Activated T-helper 1 cell treated with anti-CD3 and anti-CD28 coated beads, Interleukin-12 subunit alpha, Interleukin-12 subunit beta, Interleukin-2, Interleukin-4 antibody, amounts not matched to agents 30 ng/mL and 10 ng/mL and 1 ng/mL, durations not matched to agents 14 hours and 24 hours and 36 hours (primary cell): ENCODE measurements at regions of chr4 and their contacts with region 1.

Region 1: DNA sequence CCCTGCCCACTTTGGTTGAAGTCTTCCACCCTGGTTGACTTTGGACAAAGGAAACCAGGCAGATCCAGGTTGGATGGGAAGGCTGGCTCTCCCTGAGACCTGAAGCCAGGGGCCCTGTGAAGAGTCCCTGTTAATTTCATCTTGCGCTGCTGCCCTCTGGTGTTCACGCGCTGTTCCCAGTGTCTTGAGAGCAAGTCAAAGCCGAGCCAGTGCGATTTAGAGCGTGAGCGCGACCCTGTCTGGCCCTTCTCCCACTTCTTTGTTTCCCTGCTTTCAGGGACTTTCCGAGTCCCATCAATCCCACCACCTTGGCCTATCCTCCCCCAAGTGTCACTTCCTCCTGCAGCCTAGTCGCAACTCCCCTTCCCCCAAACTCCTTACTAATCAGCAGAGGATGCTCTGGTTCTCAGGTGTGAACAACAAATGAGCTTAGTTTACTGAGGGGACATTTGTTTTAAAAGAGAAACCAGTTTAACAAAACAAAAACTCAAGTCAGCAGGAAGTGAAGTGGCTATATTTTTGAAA is 25.8 kb upstream of the CHRNA9 start:
- DNase-seq: peak; percentile 81
- H3K4me3 Mint-ChIP-seq: peak overlapping the region; percentile 67
- H3K27ac Mint-ChIP-seq: peak overlapping the region; percentile 94
- H3K4me1 Mint-ChIP-seq: peaks cover 88% of the 10 kb centered on the region
- H3K27me3 Mint-ChIP-seq: no peaks in the 10 kb centered on the region

Region 2: DNA sequence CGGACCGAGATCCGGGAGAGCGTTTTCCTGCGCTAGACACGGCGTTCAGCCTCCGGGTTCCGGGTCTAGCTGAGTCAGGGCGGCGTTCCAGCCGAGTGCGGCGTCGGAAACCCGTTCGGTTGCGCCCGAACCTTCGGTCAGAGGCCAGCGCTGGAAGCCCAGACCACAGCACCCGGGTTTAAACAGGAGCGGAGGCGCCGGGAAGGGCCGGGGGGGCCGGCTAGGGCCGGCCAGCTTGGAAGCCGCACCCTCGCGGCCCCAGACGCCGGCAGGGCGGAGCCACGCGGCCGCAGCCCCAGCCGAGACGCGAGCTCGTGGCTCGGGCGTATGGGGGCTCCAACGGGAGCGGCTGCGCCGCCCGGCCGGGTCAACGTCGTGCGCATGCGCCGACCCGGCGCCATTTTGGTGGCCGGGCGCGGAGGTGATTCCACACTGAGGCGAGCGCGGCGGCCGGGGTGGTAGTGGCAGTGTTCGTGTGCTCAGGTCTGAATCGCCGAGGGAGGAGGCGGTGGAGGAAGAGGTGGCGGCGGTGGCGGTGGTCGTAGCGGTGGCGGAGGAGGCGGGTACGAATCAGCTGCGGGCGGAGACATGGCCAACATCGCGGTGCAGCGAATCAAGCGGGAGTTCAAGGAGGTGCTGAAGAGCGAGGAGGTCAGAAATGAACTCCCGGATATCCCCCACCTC is 611.4 kb before region 1 on chr4 and contains the start of gene UBE2K:
- intact Hi-C with region 1: loop called (anchors 5 kb)
- DNase-seq: peak; percentile 91
- H3K4me3 Mint-ChIP-seq: peak within 1 kb of the TSS; percentile 97
- H3K27ac Mint-ChIP-seq: peak within 1 kb of the TSS; percentile 97
- H3K4me1 Mint-ChIP-seq: peaks cover 37% of the 10 kb centered on the region
- H3K27me3 Mint-ChIP-seq: no peaks in the 10 kb centered on the region
- total RNA-seq, gene UBE2K: 92.2 and 96.4 TPM in 2 replicates

Region 3: DNA sequence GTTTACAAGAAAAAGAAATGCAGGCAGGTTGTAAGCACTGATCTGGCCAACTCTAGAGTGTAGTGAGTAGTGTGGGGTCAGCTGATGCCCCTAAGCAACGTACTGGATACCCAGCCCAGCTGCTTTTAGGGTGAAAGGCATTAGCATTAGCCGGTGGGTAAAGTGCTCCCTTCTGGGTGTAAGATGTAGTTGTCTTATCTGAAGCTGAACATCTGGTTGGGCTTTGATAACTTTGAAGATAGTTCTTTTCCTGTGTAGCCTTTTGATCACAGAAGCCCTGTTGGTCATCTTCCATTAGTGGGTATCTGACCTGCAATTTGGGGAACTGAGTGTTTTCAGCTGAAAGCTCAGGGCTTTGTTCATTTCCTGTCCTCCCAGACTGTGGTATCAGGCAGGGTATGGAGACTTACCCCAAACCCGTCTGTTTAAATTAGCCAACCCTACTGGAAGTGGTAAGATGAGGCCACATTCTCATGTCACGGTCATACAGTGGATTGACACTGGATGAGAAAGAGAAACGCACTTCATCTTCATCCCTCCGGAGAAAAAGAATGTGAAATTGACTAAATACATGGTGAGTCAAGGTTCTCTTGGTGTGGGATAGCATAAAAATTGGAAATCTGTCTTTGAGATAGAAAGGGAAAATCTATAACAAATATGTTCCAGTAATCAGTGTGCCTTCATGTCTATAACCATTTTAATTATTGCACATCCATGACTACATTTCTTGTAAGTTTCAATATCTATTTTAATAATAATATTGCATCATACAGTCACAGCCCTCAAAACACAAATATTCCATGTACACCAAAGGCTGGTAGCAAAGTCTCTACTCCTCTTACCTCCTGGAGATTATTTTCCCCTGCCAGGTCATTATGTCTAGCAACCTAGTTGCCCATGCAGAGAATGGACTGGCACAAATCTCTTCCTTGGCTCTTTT is 103.8 kb before region 1 on chr4:
- intact Hi-C with region 1: loop called (anchors 1 kb)
- DNase-seq: no peak
- H3K4me3 Mint-ChIP-seq: peak overlapping the region; percentile 95
- H3K27ac Mint-ChIP-seq: peak overlapping the region; percentile 97
- H3K4me1 Mint-ChIP-seq: peaks cover 82% of the 10 kb centered on the region
- H3K27me3 Mint-ChIP-seq: no peaks in the 10 kb centered on the region

Region 4: DNA sequence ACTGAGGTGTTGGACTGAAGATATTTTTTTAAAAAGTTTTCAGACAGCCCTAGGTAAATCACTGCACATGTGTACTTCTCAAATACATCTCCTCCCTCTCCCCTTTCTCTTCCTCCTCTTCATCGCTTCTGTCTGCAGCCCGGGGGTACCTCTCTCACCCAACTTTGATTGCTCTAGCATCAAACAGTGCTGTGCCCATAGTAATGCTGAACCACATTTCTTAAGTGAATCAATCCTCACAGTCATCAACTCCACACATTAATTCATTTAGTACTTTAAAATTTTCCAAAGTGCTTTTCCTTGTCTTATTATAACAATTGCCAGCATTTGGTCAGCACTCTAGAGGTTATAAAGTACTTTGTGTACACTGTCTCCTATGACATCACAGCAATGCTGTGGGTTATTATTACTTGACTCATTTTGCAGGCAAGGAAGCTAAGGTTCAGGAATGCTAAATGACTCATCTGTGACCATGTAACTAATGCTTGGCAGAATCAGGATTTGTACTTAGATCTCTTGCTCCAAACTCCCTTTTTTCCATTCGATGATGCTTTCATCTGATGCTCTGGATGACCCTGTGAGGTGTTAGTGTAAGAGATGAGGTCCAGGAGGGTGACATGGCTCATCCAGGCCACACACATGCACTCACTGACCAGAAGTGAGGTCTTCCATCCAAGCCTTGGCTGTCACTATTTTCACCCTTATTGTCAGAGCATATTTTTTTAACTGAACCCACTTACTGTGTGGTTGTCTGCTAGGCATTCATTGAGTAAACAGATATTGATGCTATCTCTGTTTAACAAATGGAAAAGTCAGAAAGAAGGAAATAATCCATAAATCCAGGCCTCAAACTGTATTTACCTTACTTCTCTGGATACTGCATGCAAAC is 53.7 kb before region 1 on chr4:
- intact Hi-C with region 1: loop called (anchors 1 kb)
- DNase-seq: no peak
- H3K4me3 Mint-ChIP-seq: peak overlapping the region; percentile 42
- H3K27ac Mint-ChIP-seq: peak overlapping the region; percentile 93
- H3K4me1 Mint-ChIP-seq: peaks cover 67% of the 10 kb centered on the region
- H3K27me3 Mint-ChIP-seq: no peaks in the 10 kb centered on the region

Region 5: DNA sequence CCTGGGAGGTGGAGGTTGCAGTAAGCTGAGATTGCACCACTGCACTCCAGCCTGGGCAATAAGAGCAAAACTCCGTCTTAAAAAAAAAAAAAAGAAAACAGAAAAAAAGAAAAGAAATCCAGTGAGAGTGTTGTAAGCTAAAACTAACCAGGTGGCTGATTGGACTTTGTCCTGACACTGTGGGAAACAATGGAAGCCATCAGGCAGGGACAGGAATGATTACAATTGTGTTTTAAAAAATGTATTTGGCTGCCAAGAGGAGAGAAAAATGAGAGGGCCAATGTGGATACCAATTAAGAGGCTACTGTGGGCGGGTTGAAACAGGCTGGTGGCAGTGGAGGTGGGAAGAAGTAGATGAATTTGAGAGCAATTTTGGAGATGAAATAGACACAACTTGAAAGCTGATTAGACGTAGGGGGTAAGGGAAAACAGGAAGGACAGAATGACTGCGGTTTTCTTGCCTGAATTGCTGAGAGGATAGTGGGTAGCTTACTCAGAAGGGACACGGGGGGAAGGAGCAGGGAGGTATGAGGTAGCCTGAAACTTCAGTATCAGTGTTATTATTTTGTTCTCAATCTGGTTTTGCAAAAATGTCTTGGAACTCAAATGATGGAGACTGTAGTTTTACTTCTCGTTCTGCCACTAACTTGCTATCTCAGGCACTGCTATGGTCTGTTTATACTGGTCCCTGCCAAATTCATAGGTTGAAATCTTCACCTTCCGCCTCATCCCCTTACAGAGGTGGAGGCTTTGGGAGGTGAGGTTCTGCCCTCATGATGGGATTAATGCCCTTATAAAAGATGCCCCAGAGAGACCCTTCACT is 19.7 kb before region 1 on chr4:
- intact Hi-C with region 1: loop called (anchors 1 kb)
- DNase-seq: no peak
- H3K4me3 Mint-ChIP-seq: peak overlapping the region; percentile 31
- H3K27ac Mint-ChIP-seq: peak overlapping the region; percentile 78
- H3K4me1 Mint-ChIP-seq: peaks cover 56% of the 10 kb centered on the region
- H3K27me3 Mint-ChIP-seq: no peaks in the 10 kb centered on the region

Region 6: DNA sequence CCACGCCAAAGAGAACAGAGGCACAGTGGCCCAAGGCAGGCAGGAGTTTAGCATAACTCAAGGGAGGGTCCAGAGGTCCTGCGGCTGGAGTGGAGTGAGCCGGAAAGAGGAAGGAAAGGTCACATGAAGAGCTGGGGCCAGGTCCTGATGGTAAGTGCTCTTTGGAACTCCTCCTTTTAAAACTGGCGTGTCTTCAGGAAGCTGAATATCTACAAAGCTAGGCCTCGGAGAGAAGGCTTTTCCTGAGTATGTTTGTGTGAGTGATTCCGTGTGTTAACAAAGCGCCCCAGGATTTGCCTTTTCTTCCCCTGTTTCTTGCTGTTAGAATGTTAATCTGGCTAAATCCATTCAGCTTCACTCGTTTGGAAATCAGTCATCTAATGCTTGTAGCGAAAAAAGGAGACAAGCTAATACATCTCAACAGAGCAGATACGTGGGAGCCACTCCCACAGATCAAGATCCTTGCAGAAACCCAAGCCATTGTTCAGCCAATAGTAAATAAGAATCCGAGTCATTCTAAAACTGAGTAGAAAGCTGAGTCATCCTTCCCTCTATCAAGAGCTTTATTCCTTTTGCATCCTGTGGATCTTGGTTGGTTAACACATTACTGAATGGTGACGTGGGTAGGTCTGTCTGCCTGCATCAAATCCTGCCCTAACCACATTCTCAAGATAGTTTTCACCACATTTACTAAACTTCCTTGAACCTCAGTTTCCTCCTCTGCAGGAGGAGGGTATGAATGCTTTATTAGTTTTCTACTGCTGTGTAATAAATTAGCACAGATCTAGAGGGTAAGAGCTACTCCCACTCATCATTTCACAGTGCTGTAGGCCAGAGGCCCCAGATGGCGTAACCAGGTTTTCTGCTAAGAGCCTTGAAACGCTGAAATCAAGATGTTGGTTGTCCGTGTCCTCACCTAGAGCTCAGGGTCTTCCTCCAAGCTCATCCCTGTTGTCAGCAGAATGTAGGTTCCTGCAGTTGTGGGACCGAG is 363.5 kb after region 1 on chr4:
- intact Hi-C with region 1: loop called (anchors 5 kb)
- DNase-seq: peak; percentile 59
- H3K4me3 Mint-ChIP-seq: peak overlapping the region; percentile 57
- H3K27ac Mint-ChIP-seq: peak overlapping the region; percentile 86
- H3K4me1 Mint-ChIP-seq: peaks cover 68% of the 10 kb centered on the region
- H3K27me3 Mint-ChIP-seq: no peaks in the 10 kb centered on the region

Region 7: DNA sequence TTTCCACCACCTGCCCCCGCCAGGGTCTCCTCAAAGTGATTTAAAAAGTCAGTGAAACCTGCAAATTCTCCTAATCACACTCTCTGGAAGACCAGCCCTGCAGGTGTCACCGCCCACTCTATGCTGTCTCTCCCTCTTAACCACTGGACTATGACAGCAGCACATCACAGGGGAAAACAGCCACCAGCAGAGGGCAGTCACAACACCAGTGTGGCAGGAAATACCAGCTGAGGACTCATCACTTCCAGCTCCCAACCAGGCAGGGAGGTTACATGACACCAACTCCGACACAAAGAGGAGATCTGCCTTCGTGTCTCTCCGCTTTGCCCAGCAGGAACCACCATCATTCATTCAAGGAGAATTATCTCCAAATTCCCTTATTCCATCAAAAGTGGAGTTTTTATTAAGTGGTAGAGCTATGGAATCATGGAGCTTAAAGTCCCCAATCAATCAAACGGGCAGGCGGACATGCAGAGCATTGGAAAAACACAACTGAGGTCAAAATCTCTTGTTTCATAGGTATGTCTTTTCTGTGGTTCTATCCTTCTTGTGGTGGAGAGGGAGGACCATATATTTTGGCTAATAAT is 531.8 kb after region 1 on chr4:
- intact Hi-C with region 1: loop called (anchors 5 kb)
- DNase-seq: peak; percentile 59
- H3K4me3 Mint-ChIP-seq: no peak overlapping the region
- H3K27ac Mint-ChIP-seq: no peak overlapping the region
- H3K4me1 Mint-ChIP-seq: peaks cover 8% of the 10 kb centered on the region
- H3K27me3 Mint-ChIP-seq: peaks cover 3% of the 10 kb centered on the region

Region 8: DNA sequence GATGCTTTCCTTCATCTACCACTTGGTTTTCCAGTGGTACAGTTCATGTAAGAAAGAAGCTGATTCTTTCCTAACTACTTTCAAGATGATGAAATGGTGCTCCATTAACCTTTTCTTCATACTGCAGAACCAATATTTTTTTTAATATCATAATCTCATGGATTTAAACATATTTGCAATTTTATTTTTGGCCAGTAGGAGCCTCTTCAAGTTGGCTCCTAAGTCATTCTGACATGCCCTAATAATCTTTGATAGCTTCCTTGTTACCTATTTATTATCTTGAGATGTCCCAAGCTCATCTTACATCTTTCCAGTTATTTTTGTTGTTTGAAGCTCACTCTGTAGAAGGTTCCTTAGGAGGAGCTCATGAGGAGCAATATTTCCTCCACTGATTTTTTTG is 734.9 kb after region 1 on chr4:
- intact Hi-C with region 1: no loop called
- DNase-seq: no peak
- H3K4me3 Mint-ChIP-seq: no peak overlapping the region
- H3K27ac Mint-ChIP-seq: no peak overlapping the region
- H3K4me1 Mint-ChIP-seq: no peaks in the 10 kb centered on the region
- H3K27me3 Mint-ChIP-seq: peaks cover 4% of the 10 kb centered on the region